ENCODE measurements at regions of chr6 and their contacts with region 1.

Region 1: DNA sequence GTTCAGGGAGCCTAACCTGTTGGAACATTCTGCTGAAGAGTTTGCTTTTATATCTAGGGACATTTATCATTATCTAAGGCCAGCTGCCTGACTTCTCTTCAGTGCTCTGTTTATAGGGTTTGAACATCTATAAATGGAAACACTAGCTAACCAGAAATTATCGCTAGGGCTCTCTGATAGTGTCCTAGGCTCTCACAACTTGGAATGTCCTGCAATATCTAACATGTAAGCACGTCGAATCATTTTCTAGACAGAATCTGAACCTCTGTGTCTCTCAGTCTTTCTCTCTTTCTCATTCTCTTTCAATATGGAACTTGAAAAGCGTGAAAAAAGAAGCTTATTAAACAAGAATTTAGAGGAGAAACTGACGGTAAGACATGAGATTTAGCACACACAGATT is 92.5 kb upstream of the MLIP start:
- DNase-seq: no peak

Region 2: GRCh38 chr6:53956068-53956711 is 62.5 kb before region 1 on chr6:
- intact Hi-C with region 1: no loop called
- DNase-seq: peak; percentile 81

Region 3: DNA sequence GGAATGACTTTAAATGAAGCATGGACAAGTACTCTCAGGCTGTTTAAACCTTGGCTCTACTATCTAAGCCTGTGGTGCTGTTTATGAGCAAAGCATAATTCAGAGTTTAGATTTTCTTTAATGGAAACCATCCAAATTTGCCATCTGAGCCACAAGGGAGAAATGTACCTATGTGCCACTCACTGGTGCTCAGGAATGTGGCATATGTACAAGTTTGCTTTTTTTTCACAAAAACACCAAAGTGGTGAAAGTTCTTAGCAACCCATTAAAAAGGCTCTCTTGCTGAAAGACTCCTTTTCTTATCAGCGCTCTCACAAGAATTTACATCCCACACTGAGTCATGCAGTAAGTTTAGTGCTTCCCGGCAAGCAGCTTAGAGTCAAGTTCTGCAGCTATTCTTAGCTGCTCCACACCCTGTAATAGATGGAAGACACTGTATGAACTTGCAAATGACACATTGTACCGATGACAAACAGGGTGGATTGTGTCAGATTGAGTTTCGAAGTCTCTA is 35.2 kb after region 1 on chr6:
- intact Hi-C with region 1: loop called (anchors 2 kb)
- DNase-seq: no peak

Region 4: GRCh38 chr6:54878674-54879073 is 860.0 kb after region 1 on chr6:
- intact Hi-C with region 1: no loop called
- DNase-seq: no peak

Region 5: DNA sequence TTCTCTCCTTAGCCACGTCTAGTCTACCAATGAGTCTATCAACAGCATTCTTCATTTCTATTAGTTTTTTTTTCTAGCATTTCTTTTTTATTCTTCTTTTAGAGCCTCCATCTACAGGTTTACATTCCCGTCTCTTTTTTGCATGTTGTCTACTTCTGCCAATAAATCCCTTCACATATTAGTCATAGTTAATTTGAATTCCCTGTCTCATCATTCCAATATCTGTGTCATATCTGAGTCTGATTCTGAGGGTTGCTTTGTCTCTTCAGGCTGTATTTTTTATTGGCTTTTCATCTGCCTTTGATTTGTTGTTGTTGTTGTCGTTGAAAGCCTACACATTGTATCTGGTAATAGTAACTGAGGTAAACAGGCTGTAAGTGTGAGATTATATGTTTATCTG is 1455.7 kb after region 1 on chr6:
- intact Hi-C with region 1: no loop called
- DNase-seq: no peak